Activated CD4-positive, alpha-beta T cell treated with anti-CD3 and anti-CD28 coated beads, Interleukin-2, amount 10 ng/mL, durations not matched to agents 24 days and 14 days (primary cell): ENCODE measurements at regions of chr3 and their contacts with region 1.

Region 1: GRCh38 chr3:167684388-167684993 is 30.7 kb upstream of the WDR49 start:
- DNase-seq: peak; percentile 87
- H3K4me3 Mint-ChIP-seq: no peak overlapping the region
- H3K27ac Mint-ChIP-seq: no peak overlapping the region
- H3K4me1 Mint-ChIP-seq: peaks cover 7% of the 10 kb centered on the region
- H3K27me3 Mint-ChIP-seq: no peaks in the 10 kb centered on the region

Region 2: DNA sequence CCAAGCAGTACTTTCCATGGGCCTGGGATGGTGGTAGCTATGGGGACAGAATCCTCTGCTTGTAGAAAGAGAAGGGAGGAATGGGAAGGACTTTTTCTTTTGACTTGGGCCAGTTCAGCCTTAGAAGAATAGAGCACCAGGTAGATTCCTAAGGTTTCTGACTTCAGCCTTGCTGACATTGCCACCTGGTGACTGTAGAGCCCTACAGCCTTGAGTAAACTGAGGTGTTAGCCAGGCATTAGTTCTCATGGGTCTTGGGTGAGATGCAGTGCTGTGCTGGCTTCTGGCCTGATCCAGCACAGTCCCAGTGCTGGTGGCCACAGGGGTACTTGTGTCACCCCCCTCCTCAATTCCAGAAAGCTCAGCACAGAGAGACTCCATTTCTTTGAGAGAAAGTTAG is 475.5 kb before region 1 on chr3:
- intact Hi-C with region 1: no loop called
- DNase-seq: no peak
- H3K4me3 Mint-ChIP-seq: no peak overlapping the region
- H3K27ac Mint-ChIP-seq: no peak overlapping the region
- H3K4me1 Mint-ChIP-seq: no peaks in the 10 kb centered on the region
- H3K27me3 Mint-ChIP-seq: no peaks in the 10 kb centered on the region

Region 3: DNA sequence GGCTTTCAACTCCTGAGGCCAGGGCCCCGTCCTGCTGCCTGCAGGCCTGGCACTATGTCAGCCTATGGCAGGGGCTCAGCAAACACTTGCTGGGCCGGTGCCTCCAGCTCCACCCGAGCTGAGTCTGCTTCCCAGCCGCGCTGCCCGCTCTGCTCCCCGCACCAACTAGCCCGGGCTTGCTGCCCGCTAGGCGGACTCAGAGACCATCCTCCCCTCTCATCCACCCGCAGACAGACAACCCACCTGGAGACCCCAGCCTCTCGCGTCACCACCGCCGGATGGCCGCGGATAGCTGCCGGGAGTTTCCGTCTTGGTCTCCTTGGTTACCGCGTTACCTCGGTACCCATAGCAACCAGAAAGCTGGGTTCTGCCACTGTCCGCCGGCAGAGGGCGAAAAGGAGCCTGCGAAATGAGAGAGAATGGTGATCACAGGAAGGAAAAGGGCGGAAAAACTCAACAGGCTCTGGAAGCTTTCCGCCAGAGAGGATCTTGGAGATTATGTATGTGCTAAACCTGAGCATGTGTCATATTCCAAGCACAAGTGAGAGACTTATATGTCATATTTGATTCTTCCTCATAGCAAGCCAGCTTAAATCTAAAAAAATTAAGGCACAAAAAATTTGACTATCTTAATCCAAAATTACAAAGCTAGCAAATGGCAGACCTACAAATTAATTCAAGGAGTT is 304.3 kb before region 1 on chr3 and contains the start of gene ZBBX:
- intact Hi-C with region 1: loop called (anchors 2 kb)
- DNase-seq: peak; percentile 96
- H3K4me3 Mint-ChIP-seq: peak within 1 kb of the TSS; percentile 85
- H3K27ac Mint-ChIP-seq: peak within 1 kb of the TSS; percentile 49
- H3K4me1 Mint-ChIP-seq: peaks cover 4% of the 10 kb centered on the region
- H3K27me3 Mint-ChIP-seq: peaks cover 14% of the 10 kb centered on the region
- total RNA-seq, gene ZBBX: not detected in 2 replicates

Region 4: GRCh38 chr3:167507954-167508353 is 176.5 kb before region 1 on chr3:
- intact Hi-C with region 1: no loop called
- DNase-seq: no peak
- H3K4me3 Mint-ChIP-seq: no peak overlapping the region
- H3K27ac Mint-ChIP-seq: no peak overlapping the region
- H3K4me1 Mint-ChIP-seq: no peaks in the 10 kb centered on the region
- H3K27me3 Mint-ChIP-seq: no peaks in the 10 kb centered on the region

Region 5: DNA sequence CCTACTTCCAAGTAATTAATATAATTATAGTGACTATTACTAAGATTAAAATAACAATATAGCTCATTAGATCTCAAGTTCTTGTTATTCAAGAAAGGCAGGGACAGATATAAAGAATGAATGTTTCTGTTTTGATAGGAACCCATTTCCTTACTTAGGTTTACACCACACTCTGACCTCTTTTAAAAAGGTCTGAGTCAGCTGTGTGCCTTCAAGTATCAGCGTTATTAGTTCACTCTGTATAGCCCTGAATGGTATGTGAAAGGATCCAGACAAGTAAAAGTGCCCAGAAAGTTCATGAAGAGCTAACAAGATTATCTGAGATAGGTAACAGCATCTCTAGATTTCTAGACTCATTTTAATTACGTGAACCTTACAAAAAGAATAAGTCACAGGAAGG is 21.3 kb after region 1 on chr3:
- intact Hi-C with region 1: no loop called
- DNase-seq: no peak
- H3K4me3 Mint-ChIP-seq: no peak overlapping the region
- H3K27ac Mint-ChIP-seq: no peak overlapping the region
- H3K4me1 Mint-ChIP-seq: peaks cover 9% of the 10 kb centered on the region
- H3K27me3 Mint-ChIP-seq: no peaks in the 10 kb centered on the region

Region 6: DNA sequence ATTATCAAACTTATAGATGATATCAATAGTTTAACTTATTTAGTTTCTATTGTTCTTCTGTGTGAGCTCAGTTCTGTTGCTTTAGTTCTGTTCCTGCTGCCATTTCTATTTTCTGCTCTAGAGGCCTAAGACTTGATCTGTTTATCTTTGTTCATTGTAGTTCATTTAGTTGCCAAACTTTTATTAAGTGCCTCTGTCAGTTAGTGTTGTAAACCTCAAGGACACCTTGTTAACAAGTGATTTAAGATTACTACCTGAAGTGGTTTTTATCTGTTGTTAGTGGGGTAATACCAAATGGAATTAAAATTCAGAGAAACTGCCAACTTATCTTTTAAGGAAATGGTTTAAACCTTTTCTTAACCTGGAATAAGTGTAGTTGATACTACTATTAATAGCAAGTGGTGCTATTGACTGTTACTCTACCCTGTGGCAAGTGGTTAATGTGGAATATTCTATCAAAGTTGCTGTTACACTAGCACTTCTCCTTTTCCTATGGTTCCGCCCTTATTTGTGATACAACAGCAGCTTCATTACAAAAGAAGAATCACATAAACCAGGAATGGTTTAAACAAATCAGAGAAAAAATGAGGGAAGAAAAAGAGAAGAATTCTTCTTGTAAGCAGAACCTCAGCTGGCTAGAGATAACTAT is 911.8 kb after region 1 on chr3:
- intact Hi-C with region 1: no loop called
- DNase-seq: no peak
- H3K4me3 Mint-ChIP-seq: no peak overlapping the region
- H3K27ac Mint-ChIP-seq: no peak overlapping the region
- H3K4me1 Mint-ChIP-seq: no peaks in the 10 kb centered on the region
- H3K27me3 Mint-ChIP-seq: no peaks in the 10 kb centered on the region